GM12878 (cell line): ENCODE measurements at regions of chr5 and their contacts with region 1.

Region 1: GRCh38 chr5:173925448-173926071 is 37.4 kb downstream of the CPEB4 start:
- DNase-seq: no peak
- ATAC-seq: peak; percentile 75
- H3K4me3 ChIP-seq: no peak overlapping the region
- H3K27ac ChIP-seq: peak overlapping the region; percentile 32; the same call in 1 of the 2 replicates
- H3K4me1 ChIP-seq: peaks cover 21% of the 10 kb centered on the region
- H3K27me3 ChIP-seq: no peaks in the 10 kb centered on the region
- CTCF ChIP-seq: peak; percentile 60 to 70 (median 63)
- EP300 ChIP-seq: no peak
- POLR2A ChIP-seq: no peak
- RAD21 ChIP-seq: peak; percentile 76

Region 2: GRCh38 chr5:173637340-173637739 is 288.2 kb before region 1 on chr5:
- CTCF ChIA-PET with region 1: interaction called, 10 read pairs
- POLR2A ChIA-PET with region 1: interaction called, 5 read pairs
- RAD21 ChIA-PET with region 1: interaction called, 5 read pairs
- SMC1A ChIA-PET with region 1: interaction called, 3 read pairs
- in situ Hi-C with region 1: no loop called
- intact Hi-C with region 1: no loop called
- DNase-seq: no peak
- ATAC-seq: no peak
- H3K4me3 ChIP-seq: no peak overlapping the region
- H3K27ac ChIP-seq: no peak overlapping the region
- H3K4me1 ChIP-seq: no peaks in the 10 kb centered on the region
- H3K27me3 ChIP-seq: no peaks in the 10 kb centered on the region
- CTCF ChIP-seq: no peak
- EP300 ChIP-seq: no peak
- POLR2A ChIP-seq: no peak
- RAD21 ChIP-seq: no peak

Region 3: DNA sequence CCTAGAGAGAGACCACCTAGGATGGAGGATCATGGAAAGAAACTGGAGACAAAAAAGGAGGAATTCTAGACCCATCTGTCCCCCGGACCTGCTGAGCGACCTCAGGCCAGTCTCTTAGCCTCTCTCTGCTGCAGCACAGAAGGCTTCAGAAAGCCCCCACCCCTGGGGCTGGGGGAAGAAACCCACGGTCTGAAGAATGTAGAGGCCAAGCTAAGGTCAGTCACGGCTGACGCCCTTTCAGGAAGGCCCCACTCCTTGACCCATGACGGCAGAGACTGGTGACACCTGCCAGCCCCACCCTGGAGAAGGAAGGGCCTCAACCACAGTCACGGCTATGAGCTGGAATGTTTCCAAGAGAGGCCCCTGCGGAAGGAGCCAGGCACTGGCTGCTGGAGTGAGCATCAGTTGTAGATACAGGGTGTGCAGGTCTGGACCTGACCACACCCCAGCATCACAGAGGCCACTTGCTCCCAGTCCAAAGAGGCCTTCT is 188.6 kb before region 1 on chr5:
- CTCF ChIA-PET with region 1: interaction called, 11 read pairs
- POLR2A ChIA-PET with region 1: no interaction called
- RAD21 ChIA-PET with region 1: interaction called, 6 read pairs
- SMC1A ChIA-PET with region 1: interaction called, 5 read pairs
- in situ Hi-C with region 1: no loop called
- intact Hi-C with region 1: no loop called
- DNase-seq: peak; percentile 76
- ATAC-seq: peak; percentile 91
- H3K4me3 ChIP-seq: peak overlapping the region; percentile 30; the same call in 1 of the 2 replicates
- H3K27ac ChIP-seq: peak overlapping the region; percentile 76
- H3K4me1 ChIP-seq: peaks cover 63% of the 10 kb centered on the region
- H3K27me3 ChIP-seq: no peaks in the 10 kb centered on the region
- CTCF ChIP-seq: no peak
- EP300 ChIP-seq: peak; percentile 47 to 49; a peak in 1 of 4 replicates
- POLR2A ChIP-seq: peak; percentile 48; the same call in 1 of the 2 replicates
- RAD21 ChIP-seq: 0 out of 2 replicates have a peak, but pooled peaks have one; percentile 10

Region 4: DNA sequence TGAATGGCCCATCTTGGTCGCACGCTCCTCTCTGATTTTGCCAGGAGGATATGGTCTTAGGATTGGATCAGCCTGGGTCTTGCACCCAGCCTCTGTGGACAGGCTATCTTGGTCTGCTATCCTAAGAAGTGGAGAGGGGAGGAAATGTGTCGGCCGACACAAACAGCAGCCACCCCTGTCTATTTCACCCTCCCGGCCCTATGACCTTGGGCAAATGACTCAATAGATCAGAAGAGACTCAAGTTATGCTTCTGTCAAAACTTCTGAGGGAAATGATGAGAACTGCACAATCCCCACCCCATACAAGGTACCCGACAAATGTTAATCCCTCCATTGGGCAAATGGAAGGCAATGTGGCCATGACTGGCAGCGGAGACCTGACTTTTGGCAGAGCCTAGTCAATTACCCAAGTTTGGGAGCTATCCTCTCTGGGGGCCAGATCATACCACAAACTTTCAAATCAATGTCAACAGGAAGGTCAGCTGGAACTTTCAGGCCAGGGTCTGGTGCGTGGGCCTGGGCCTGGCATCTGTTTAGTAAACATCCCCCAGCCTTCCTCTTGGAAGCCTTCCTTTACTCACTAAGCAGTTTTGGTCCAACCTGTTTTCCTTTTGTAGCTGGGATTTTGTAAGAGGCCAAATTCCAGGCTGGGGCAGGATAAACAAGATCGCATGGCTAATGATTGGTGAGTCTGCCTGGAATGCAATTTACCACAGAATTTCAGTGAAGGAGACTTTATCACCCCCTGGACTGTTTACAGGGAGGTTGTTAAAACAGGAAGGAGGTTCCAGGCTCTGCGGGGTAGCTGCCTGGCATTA is 101.6 kb before region 1 on chr5:
- CTCF ChIA-PET with region 1: interaction called, 29 read pairs
- POLR2A ChIA-PET with region 1: interaction called, 6 read pairs
- RAD21 ChIA-PET with region 1: interaction called, 28 read pairs
- SMC1A ChIA-PET with region 1: interaction called, 40 read pairs
- in situ Hi-C with region 1: no loop called
- intact Hi-C with region 1: no loop called
- DNase-seq: no peak
- ATAC-seq: no peak
- H3K4me3 ChIP-seq: no peak overlapping the region
- H3K27ac ChIP-seq: peak overlapping the region; percentile 96
- H3K4me1 ChIP-seq: peaks cover 55% of the 10 kb centered on the region
- H3K27me3 ChIP-seq: no peaks in the 10 kb centered on the region
- CTCF ChIP-seq: no peak
- EP300 ChIP-seq: no peak
- POLR2A ChIP-seq: no peak
- RAD21 ChIP-seq: no peak

Region 5: DNA sequence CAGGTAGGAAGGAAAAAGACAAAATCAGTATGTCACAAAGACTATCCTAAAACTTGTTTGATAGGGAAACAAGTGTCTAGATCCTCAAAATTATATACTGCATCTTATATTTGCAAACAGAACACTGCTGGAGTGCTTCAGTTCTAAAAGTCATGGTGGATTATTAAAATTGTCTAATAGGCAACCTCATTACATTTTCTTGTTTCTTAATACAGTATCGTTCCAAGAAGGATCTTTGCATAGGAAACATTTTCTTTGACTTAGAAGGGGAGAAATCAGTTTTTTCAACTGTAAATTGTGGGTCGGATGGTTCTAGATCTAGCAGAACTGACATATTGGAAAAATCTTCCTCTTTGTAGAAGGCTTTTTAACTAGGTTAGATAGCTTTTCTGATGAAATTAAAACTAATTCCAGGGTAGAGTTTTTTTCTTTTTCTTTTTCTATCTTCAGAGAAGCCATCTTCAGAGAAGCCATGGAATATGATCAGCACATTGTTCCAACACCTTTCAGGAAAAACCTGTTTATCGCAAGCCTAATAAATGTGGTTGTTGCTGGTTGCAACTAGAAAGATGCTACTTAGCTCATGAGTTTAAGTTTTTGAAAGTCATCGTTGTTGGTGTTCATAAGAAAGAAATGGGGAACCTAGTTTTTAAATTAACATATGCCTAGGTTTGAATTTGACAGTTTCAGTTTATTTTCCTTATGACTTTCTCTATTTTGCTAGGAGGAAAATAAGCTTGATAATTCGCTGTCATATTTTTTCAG is 30.0 kb before region 1 on chr5:
- CTCF ChIA-PET with region 1: interaction called, 104 read pairs
- POLR2A ChIA-PET with region 1: interaction called, 16 read pairs
- RAD21 ChIA-PET with region 1: interaction called, 142 read pairs
- SMC1A ChIA-PET with region 1: interaction called, 361 read pairs
- in situ Hi-C with region 1: no loop called
- intact Hi-C with region 1: loop called (anchors 5 kb)
- DNase-seq: no peak
- ATAC-seq: peak; percentile 1; the same call in 1 of the 3 replicates
- H3K4me3 ChIP-seq: peak overlapping the region; percentile 54
- H3K27ac ChIP-seq: peak overlapping the region; percentile 65
- H3K4me1 ChIP-seq: peaks cover 3% of the 10 kb centered on the region; the same call in 1 of the 2 replicates
- H3K27me3 ChIP-seq: no peaks in the 10 kb centered on the region
- CTCF ChIP-seq: no peak
- EP300 ChIP-seq: no peak
- POLR2A ChIP-seq: no peak
- RAD21 ChIP-seq: no peak

Region 6: DNA sequence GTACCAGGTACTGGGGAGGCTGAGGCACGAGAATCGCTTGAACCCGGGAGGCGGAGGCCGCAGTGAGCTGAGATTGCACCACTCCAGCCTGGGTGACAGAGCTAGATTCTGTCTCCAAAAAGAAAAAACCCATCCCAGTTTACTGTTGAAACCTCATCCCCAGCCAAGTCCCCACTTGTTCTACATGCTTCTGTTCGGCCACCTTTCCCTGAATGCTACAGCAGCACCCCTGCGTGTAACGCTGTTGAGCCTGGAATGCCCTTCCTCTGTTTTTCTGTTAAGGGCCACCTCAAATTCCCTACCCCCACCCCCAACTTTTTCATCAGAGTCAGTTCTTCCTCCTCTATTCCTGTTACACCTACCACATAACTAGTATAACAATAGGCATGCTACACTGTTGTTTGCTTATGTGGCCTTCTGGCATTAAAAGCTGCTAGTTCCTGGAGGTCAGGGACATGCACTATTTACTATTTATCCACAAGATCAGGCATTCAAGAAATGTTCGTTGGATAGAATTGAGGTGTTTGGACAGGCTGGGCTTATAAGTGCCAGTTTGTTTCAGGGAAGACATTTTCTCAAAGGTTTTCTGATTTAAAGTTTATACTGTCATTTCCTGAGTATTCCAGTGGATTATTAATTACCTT is 16.3 kb after region 1 on chr5:
- CTCF ChIA-PET with region 1: interaction called, 24 read pairs
- POLR2A ChIA-PET with region 1: interaction called, 3 read pairs
- RAD21 ChIA-PET with region 1: interaction called, 11 read pairs
- SMC1A ChIA-PET with region 1: interaction called, 28 read pairs
- in situ Hi-C with region 1: no loop called
- intact Hi-C with region 1: no loop called
- DNase-seq: no peak
- ATAC-seq: no peak
- H3K4me3 ChIP-seq: no peak overlapping the region
- H3K27ac ChIP-seq: no peak overlapping the region
- H3K4me1 ChIP-seq: no peaks in the 10 kb centered on the region
- H3K27me3 ChIP-seq: no peaks in the 10 kb centered on the region
- CTCF ChIP-seq: no peak
- EP300 ChIP-seq: no peak
- POLR2A ChIP-seq: no peak
- RAD21 ChIP-seq: no peak